Caco-2 (cell line): ENCODE measurements at regions of chr5 and their contacts with region 1.

Region 1: DNA sequence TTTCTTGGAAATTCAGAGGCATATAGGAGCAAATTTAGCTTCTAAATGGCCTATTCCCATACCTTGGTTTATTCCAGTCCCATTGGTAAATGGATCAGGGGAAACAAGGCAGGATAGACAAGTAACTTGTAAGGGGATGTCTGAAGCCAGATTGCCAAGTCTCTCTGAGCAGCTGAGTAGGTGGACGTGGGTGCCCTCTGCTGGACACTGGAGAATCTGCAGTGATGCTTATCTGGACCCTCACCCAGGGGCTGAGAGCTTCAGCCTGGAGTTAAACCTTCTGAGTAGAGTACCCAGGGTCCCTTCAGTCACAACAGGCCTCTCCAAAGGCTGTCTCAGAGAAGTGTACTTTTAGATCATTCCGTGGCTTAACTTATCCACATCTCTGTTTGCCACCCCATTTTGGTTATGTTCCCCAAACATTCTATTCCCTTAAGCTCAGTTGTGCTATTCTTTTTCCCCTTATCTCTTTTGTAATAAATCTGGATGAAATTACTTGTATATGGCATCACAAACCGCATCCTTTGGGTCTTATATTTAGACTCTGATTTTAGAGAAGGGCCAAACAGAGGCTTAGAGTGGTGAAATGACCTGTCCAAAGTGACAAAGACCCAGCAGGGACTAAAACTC is 218.3 kb upstream of the GLRA1 start:
- DNase-seq: peak; percentile 61 to 75
- H3K4me3 ChIP-seq: no peak overlapping the region
- H3K4me3 Mint-ChIP-seq: no peak overlapping the region
- H3K27ac Mint-ChIP-seq: no peak overlapping the region
- H3K4me1 ChIP-seq: no peaks in the 10 kb centered on the region
- H3K4me1 Mint-ChIP-seq: no peaks in the 10 kb centered on the region
- H3K27me3 ChIP-seq: no peaks in the 10 kb centered on the region; the same call in 1 of the 2 replicates
- H3K27me3 Mint-ChIP-seq: peaks cover 8% of the 10 kb centered on the region
- CTCF ChIP-seq: peak; percentile 78 to 93

Region 2: GRCh38 chr5:152349683-152350526 is 206.9 kb after region 1 on chr5:
- CTCF ChIA-PET with region 1: interaction called, 8 read pairs
- POLR2A ChIA-PET with region 1: no interaction called
- intact Hi-C with region 1: loop called (anchors 5 kb)
- DNase-seq: peak; percentile 60 to 66
- H3K4me3 ChIP-seq: no peak overlapping the region
- H3K4me3 Mint-ChIP-seq: no peak overlapping the region
- H3K27ac Mint-ChIP-seq: no peak overlapping the region
- H3K4me1 ChIP-seq: peaks cover 9% of the 10 kb centered on the region
- H3K4me1 Mint-ChIP-seq: peaks cover 6% of the 10 kb centered on the region
- H3K27me3 ChIP-seq: no peaks in the 10 kb centered on the region
- H3K27me3 Mint-ChIP-seq: no peaks in the 10 kb centered on the region
- CTCF ChIP-seq: peak; percentile 89 to 94